Common myeloid progenitor, CD34-positive (primary cell): ENCODE measurements at regions of chr1 and their contacts with region 1.

Region 1: DNA sequence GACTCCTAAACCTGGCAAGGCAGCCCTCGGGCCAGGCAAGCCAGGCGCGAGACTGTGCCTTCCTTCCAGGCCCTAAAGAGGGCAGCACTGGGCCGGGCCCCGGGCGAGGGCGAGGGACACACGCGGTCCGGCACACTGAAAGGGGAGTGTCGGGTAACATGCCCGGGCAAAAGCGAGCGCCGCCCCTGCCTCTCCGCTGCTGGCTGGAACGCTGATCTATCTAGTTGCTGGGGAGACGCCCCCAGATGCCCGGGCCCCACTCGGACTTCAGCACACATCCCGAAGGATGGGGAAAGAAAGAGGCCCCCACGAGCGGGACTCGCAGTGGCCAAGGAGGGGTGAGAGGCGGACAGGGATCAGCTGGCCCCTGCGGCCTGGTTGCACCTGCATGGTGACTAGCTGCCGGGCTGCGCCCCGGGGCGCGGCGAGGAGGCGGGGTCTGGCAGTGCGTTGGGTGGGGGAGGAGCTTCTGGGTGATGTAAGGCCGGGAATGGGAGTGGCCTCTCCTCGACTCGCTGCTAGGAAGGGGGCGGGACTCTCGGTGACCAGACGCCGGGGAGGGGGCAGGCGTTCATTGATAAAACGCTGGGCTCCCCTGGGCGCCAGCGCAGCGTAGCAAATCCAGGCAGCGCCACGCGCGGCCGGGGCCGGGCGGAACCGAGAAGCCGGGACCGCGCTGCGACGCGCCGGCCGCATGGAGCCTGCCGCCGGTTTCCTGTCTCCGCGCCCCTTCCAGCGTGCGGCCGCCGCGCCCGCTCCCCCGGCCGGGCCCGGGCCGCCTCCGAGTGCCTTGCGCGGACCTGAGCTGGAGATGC is at the start of gene PLK3:
- DNase-seq: peak; percentile 97 to 99 (median 99)
- H3K4me3 ChIP-seq: peak within 1 kb of the TSS; percentile 58 to 86 (median 78)
- H3K27ac ChIP-seq: peak within 1 kb of the TSS in 1 of 2 experiments; percentile 71
- H3K4me1 ChIP-seq: peaks cover 0 to 32% (median 24%) of the 10 kb centered on the region in 4 experiments
- H3K27me3 ChIP-seq: no peaks in the 10 kb centered on the region

Region 2: DNA sequence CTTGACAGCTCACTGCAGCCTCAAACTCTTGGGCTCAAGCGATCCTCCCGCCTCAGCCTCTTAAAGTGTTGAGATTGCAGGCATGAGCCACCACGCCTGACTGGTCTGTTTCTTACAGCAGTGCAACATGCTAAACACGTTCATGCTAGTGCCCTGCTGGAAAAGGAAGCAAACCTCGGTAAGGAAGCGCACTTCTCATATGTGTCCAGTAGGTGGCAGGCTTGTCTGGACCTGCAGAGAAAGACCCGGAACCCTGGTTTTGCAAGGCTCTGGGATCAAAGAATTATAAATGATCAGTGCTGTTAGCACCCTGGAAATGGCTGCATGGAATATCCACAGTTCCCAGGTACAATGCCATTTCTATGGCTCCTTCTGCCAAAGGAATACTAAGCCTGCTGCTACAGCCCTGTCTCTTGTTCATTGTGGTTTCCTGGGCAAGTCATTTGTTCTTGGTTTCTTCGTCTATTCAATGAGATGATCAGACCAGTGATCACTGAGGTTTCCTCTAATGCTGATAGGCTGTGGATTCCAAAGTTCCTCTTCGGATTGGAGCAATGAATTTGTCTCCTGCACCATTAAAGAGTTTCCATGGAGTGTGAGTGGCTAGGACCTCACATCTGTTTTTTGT is 84.9 kb before region 1 on chr1:
- CTCF ChIA-PET with region 1: no interaction called
- POLR2A ChIA-PET with region 1: no interaction called
- DNase-seq: peak; percentile 85 to 90 (median 90)
- H3K4me3 ChIP-seq: peak overlapping the region in 2 of 7 experiments; percentile 45 to 56
- H3K27ac ChIP-seq: no peak overlapping the region
- H3K4me1 ChIP-seq: peaks cover 3 to 43% (median 36%) of the 10 kb centered on the region in 4 experiments
- H3K27me3 ChIP-seq: no peaks in the 10 kb centered on the region

Region 3: DNA sequence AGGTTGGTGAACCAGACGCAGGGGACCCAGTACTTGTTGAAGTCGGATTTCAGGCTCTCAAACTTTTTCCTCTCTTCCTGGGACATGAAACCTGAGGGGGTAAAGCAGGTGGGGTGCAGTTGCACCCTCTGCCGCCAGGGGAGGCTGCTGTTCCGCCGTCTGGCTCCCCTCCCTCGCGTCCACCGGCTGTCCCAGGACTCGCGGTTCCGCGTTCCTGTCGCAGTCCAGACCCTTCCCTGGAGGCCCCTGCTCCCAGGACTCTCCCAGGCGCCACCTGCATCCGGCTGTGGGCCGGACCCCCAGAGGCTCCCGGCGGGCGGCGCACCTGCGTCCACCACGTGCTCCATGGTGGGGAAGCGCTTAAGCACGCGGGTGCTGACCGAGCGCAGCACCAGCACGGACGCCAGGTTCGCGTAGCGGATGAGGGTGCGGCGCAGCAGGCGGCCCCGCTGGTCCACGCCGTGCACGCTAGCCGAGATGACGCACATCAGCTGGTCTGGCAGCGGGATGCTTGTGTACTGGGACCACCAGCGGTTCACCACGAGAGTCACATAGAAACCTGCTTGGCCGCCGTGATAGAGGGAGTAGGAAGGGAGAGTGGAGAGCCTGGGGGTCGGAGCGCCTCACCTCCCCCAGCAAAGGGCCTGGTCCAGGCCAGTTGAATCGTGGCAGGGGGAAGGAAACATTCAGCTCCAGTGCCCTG is 13.7 kb before region 1 on chr1:
- CTCF ChIA-PET with region 1: interaction called, 43 read pairs
- POLR2A ChIA-PET with region 1: interaction called, 5 read pairs
- DNase-seq: peak; percentile 76 to 85 (median 85)
- H3K4me3 ChIP-seq: peak overlapping the region in 6 of 7 experiments; percentile 23 to 76 (median 58)
- H3K27ac ChIP-seq: no peak overlapping the region
- H3K4me1 ChIP-seq: peaks cover 8 to 35% (median 30%) of the 10 kb centered on the region in 4 experiments
- H3K27me3 ChIP-seq: no peaks in the 10 kb centered on the region

Region 4: DNA sequence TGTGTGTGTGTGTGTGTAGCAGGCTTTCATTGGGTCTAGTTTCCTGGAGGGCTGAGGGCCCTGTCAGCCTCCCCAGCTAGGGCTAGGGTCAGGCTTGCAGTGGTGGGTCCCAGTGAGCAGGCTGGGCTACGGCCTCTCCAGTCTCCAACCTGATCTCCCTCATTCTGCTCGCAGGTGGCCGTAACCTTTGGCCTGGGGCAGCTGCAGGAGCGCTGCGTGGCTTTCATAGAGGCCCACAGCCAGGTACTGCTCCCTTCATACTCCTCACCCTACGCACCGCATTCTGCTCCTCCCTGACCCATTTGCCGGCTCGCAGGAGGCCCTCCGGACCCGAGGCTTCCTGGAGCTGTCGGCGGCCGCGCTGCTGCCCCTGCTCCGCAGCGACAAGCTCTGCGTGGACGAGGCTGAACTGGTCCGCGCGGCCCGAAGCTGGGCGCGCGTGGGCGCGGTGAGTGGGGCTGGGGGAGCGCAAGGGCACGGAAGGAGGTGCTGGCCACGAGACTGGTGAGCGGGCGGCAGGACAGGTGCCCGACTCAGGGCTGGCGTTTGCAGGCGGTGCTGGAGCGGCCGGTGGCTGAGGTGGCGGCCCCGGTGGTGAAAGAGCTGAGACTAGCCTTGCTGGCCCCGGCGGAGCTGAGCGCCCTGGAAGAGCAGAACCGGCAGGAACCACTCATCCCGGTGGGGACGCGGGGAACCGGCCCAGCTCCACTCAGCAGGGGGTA is 13.0 kb after region 1 on chr1:
- CTCF ChIA-PET with region 1: interaction called, 69 read pairs
- POLR2A ChIA-PET with region 1: interaction called, 59 read pairs
- DNase-seq: no peak
- H3K4me3 ChIP-seq: peak overlapping the region in 5 of 7 experiments; percentile 4 to 85 (median 67)
- H3K27ac ChIP-seq: no peak overlapping the region
- H3K4me1 ChIP-seq: peaks cover 11 to 63% (median 51%) of the 10 kb centered on the region in 4 experiments
- H3K27me3 ChIP-seq: no peaks in the 10 kb centered on the region

Region 5: GRCh38 chr1:45065083-45065482 is 265.1 kb after region 1 on chr1:
- CTCF ChIA-PET with region 1: no interaction called
- POLR2A ChIA-PET with region 1: no interaction called
- DNase-seq: no peak
- H3K4me3 ChIP-seq: no peak overlapping the region
- H3K27ac ChIP-seq: no peak overlapping the region
- H3K4me1 ChIP-seq: no peaks in the 10 kb centered on the region
- H3K27me3 ChIP-seq: no peaks in the 10 kb centered on the region